Prostate gland (tissue), 2 donors: ENCODE measurements at regions of chr3 and their contacts with region 1.

Region 1: GRCh38 chr3:188058569-188059184 is 95.3 kb upstream of the LPP start:
- DNase-seq: no peak
- H3K4me3 ChIP-seq: no peak overlapping the region
- H3K27ac ChIP-seq: no peak overlapping the region
- H3K4me1 ChIP-seq: no peaks in the 10 kb centered on the region
- H3K27me3 ChIP-seq: no peaks in the 10 kb centered on the region
- CTCF ChIP-seq: no peak
- POLR2A ChIP-seq: no peak

Region 2: DNA sequence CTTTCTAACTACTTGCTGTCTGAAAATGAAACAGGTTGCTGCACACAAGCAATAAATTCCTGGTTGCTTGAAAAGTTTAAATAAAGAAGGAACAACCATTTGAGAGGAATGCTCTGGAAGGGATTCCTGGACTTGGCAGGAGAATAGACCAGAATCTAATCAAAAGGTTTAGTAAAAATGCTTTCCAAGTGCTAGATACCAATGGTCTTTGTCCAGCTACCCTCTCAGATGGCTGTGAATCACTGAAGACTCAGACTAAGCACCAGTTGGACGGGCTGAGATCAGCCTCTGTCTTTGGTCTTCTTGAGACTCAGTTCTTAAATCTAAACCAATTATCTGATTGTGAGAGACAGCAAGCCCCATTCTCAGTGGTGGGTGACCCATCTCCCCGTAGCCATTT is 67.6 kb after region 1 on chr3:
- intact Hi-C with region 1: loop called (anchors 5 kb)
- DNase-seq: no peak
- H3K4me3 ChIP-seq: no peak overlapping the region
- H3K27ac ChIP-seq: peak overlapping the region; percentile 31 to 38
- H3K4me1 ChIP-seq: no peaks in the 10 kb centered on the region
- H3K27me3 ChIP-seq: no peaks in the 10 kb centered on the region
- CTCF ChIP-seq: no peak
- POLR2A ChIP-seq: no peak